Activated B cell treated with CpG ODN at 0.5 μM for 24 hours (primary cell): ENCODE measurements at regions of chr2 and their contacts with region 1.

Region 1: GRCh38 chr2:32277674-32278482 is at the start of gene YIPF4:
- DNase-seq: peak; percentile 92
- ATAC-seq: peak; percentile 98
- H3K4me3 Mint-ChIP-seq: peak within 1 kb of the TSS; percentile 90
- H3K27ac Mint-ChIP-seq: peak within 1 kb of the TSS; percentile 94
- H3K4me1 Mint-ChIP-seq: peaks cover 23% of the 10 kb centered on the region
- H3K27me3 Mint-ChIP-seq: peaks cover 9% of the 10 kb centered on the region
- CTCF ChIP-seq: no peak
- total RNA-seq, gene YIPF4: 25.6 and 27.2 TPM in 2 replicates

Region 2: DNA sequence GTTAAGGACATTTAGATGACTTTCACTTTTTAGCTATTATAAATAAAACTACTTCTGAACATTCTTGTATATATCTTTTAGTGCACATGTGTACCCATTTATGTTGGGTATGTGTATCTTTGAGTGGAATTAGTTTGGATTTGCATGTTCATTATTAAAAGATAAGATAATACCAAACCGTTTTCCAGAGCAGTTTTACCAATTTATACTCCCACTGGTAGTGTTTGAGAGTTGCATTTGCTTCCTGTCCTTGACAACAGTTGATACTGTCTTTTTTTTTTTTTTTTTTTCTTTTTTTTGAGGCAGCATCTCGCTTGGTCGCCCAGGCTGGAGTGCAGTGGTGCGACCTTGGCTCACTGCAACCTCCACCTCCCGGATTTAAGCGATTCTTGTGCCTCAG is 88.9 kb before region 1 on chr2:
- CTCF ChIA-PET with region 1: no interaction called
- POLR2A ChIA-PET with region 1: no interaction called
- intact Hi-C with region 1: no loop called
- DNase-seq: no peak
- ATAC-seq: no peak
- H3K4me3 Mint-ChIP-seq: no peak overlapping the region
- H3K27ac Mint-ChIP-seq: no peak overlapping the region
- H3K4me1 Mint-ChIP-seq: peaks cover 9% of the 10 kb centered on the region
- H3K27me3 Mint-ChIP-seq: no peaks in the 10 kb centered on the region
- CTCF ChIP-seq: no peak

Region 3: DNA sequence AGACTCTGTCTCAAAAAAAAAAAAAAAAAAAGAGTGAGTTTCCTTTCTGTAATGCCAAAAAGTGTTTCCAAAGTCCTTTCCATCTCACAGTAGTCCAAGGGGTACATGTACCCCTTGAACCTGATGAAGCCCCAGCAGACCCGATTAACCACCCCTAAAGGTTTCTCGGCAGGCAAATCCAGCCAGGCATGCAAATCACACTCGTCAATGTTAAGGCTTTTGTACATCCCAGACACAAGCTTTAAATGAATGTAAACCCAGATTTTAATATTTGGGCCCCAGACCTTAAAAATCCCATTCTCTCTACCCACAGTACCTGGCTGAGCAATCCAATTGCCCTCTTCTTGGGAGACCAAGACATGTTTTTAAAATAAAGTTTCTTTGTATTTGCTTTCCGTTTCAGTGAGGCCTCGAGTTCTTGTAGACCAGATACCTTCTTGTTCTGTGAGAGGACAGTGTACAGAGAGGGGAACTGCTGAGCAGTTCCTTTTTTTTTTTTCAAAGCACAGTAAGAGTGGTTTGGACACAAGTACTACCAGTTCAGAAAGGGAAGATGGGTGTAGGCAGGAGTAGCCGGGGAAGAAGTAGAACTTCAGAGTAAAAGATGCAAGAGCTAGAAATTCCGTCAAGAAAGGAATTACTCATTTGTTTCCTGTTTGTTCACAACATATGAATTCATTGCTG is 13.3 kb before region 1 on chr2 and contains the start of gene NLRC4:
- CTCF ChIA-PET with region 1: interaction called, 3 read pairs
- POLR2A ChIA-PET with region 1: interaction called, 3 read pairs
- intact Hi-C with region 1: loop called (anchors 1 kb)
- DNase-seq: no peak
- ATAC-seq: peak; percentile 95
- H3K4me3 Mint-ChIP-seq: peak within 1 kb of the TSS; percentile 80
- H3K27ac Mint-ChIP-seq: peak within 1 kb of the TSS; percentile 96
- H3K4me1 Mint-ChIP-seq: peaks cover 29% of the 10 kb centered on the region
- H3K27me3 Mint-ChIP-seq: no peaks in the 10 kb centered on the region
- CTCF ChIP-seq: no peak
- total RNA-seq, gene NLRC4: 0.91 and 0.98 TPM in 2 replicates

Region 4: DNA sequence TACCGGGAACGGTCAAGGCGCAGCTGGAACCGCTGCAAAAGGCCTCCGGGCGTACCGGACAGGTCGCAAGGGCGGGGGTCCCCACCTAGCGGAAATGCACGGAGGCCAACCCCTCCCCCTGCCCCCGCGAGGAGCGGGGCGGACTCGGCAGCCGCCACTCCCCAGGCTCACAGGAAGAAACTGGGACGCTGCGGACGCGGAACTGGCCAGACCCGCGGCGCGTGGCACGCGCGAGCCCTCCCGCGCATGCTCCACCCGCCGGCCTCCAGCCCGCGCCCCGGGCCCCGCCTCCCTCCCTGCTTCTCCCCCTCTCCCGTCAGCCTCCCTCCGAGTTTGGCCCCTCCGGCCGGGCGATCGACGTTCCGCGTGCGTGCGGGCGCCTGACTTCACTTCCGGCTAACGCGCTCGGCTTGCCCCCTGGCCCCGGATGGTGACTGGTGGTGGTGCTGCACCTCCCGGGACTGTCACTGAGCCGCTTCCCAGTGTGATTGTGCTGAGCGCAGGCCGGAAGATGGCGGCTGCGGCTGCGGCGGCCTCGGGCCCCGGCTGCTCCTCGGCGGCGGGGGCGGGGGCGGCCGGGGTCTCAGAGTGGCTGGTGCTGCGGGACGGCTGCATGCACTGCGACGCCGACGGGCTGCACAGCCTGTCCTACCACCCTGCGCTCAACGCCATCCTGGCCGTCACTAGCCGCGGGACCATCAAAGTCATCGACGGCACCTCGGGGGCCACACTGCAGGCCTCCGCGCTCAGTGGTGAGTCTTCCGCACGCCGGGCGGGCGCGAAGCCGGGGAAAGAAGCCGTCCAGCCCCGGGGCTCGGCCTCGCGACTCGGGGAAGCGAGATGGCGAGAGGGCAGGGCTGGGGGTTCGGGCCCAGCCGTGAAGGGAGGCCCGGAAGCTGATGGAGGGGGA is 79.1 kb after region 1 on chr2 and contains the start of gene BIRC6:
- CTCF ChIA-PET with region 1: no interaction called
- POLR2A ChIA-PET with region 1: interaction called, 3 read pairs
- intact Hi-C with region 1: loop called (anchors 1 kb)
- DNase-seq: peak; percentile 96
- ATAC-seq: peak; percentile 87
- H3K4me3 Mint-ChIP-seq: peak within 1 kb of the TSS; percentile 93
- H3K27ac Mint-ChIP-seq: peak within 1 kb of the TSS; percentile 90
- H3K4me1 Mint-ChIP-seq: peaks cover 41% of the 10 kb centered on the region
- H3K27me3 Mint-ChIP-seq: no peaks in the 10 kb centered on the region
- CTCF ChIP-seq: no peak
- total RNA-seq, gene BIRC6: 155 and 180 TPM in 2 replicates

Region 5: DNA sequence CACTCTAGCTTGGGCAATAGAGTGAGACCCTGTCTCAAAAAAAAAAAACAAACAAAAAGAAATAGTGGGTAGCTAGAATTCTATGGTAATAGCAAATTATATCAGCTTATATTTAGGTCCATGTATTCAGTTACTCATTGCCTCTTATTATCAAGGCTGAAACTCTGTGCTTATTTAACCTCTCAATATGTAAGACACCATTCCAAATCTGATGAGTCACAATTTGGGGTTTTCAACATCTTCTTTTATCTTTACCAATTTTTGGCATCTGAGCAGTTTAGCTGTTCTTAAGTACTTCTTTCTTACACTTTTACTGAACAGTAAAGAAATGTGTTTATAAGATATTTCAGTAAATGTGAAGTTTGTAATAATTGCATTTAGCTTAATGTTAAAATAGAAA is 419.3 kb after region 1 on chr2:
- CTCF ChIA-PET with region 1: no interaction called
- POLR2A ChIA-PET with region 1: no interaction called
- intact Hi-C with region 1: no loop called
- DNase-seq: no peak
- ATAC-seq: no peak
- H3K4me3 Mint-ChIP-seq: no peak overlapping the region
- H3K27ac Mint-ChIP-seq: no peak overlapping the region
- H3K4me1 Mint-ChIP-seq: no peaks in the 10 kb centered on the region
- H3K27me3 Mint-ChIP-seq: no peaks in the 10 kb centered on the region
- CTCF ChIP-seq: no peak